WTC11 (cell line): ENCODE measurements at regions of chr2 and their contacts with region 1.

Region 1: GRCh38 chr2:21175895-21176646 is 52.3 kb downstream of the TDRD15 start:
- DNase-seq: no peak
- ATAC-seq: no peak
- H3K4me3 Mint-ChIP-seq: no peak overlapping the region
- H3K27ac Mint-ChIP-seq: no peak overlapping the region
- H3K4me1 Mint-ChIP-seq: peaks cover 9% of the 10 kb centered on the region
- H3K27me3 Mint-ChIP-seq: no peaks in the 10 kb centered on the region
- CTCF ChIP-seq: no peak

Region 2: GRCh38 chr2:21317131-21317530 is 141.1 kb after region 1 on chr2:
- CTCF ChIA-PET with region 1: interaction called, 18 read pairs
- POLR2A ChIA-PET with region 1: no interaction called
- DNase-seq: peak; percentile 61
- ATAC-seq: peak; percentile 89
- H3K4me3 Mint-ChIP-seq: no peak overlapping the region
- H3K27ac Mint-ChIP-seq: no peak overlapping the region
- H3K4me1 Mint-ChIP-seq: peaks cover 4% of the 10 kb centered on the region
- H3K27me3 Mint-ChIP-seq: no peaks in the 10 kb centered on the region
- CTCF ChIP-seq: peak; percentile 82

Region 3: GRCh38 chr2:21599417-21599816 is 423.3 kb after region 1 on chr2:
- CTCF ChIA-PET with region 1: no interaction called
- POLR2A ChIA-PET with region 1: no interaction called
- DNase-seq: no peak
- ATAC-seq: no peak
- H3K4me3 Mint-ChIP-seq: no peak overlapping the region
- H3K27ac Mint-ChIP-seq: no peak overlapping the region
- H3K4me1 Mint-ChIP-seq: no peaks in the 10 kb centered on the region
- H3K27me3 Mint-ChIP-seq: no peaks in the 10 kb centered on the region
- CTCF ChIP-seq: no peak